ENCODE measurements at regions of chr14 and their contacts with region 1.

Region 1: GRCh38 chr14:93132470-93133065 is 16.8 kb upstream of the ITPK1 start:
- DNase-seq: no peak
- CTCF ChIP-seq: peak; percentile 49

Region 2: GRCh38 chr14:93146119-93146518 is 13.6 kb after region 1 on chr14:
- CTCF ChIA-PET with region 1: interaction called, 10 read pairs
- POLR2A ChIA-PET with region 1: no interaction called
- DNase-seq: peak; percentile 39
- CTCF ChIP-seq: no peak

Region 3: GRCh38 chr14:93533472-93534241 is 401.1 kb after region 1 on chr14:
- CTCF ChIA-PET with region 1: no interaction called
- POLR2A ChIA-PET with region 1: no interaction called
- DNase-seq: peak; percentile 45
- CTCF ChIP-seq: no peak

Region 4: GRCh38 chr14:93702946-93703345 is 570.4 kb after region 1 on chr14:
- CTCF ChIA-PET with region 1: no interaction called
- POLR2A ChIA-PET with region 1: no interaction called
- DNase-seq: no peak
- CTCF ChIP-seq: no peak

Measured in GM10248 (cell line).